Left cardiac atrium (tissue), 4 donors: ENCODE measurements at regions of chr19 and their contacts with region 1.

Region 1: DNA sequence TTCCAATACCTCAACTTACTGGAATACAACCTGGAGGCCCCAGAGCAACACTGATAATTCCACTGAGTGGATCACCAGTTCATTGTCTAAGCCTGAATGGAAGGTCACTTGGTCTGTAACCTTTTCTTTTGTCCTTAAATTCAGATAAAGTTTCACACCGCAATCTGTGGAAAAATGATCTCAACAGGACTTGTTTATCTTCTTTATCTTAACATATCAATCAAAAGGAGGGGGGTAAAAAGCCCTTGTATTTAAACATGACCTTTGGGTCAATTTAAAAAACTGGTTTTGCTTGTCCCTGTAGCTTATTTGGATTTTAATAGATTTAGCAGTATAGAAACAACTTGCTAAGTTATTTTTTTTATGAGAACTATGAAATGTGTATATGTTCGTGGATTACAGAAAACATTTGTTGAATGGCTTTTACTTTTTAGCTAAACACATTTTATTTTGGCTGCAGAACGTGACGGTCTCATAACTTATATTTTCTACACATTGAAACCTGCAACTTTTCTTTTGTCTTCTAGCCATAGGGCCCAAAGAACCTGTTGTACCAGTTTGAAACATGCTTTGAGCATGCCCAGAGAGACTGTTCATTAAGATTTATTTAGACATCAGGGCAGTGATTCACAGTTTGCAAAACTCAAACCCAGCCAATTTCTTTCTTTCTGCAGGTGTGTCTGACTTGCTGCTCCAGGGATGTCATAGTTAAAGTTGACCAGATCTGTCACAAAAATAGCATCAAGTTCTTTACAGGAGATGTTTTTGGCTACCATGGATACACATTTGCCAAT is 21.8 kb downstream of the SAE1 start:
- DNase-seq: no peak
- ATAC-seq: no peak

Region 2: DNA sequence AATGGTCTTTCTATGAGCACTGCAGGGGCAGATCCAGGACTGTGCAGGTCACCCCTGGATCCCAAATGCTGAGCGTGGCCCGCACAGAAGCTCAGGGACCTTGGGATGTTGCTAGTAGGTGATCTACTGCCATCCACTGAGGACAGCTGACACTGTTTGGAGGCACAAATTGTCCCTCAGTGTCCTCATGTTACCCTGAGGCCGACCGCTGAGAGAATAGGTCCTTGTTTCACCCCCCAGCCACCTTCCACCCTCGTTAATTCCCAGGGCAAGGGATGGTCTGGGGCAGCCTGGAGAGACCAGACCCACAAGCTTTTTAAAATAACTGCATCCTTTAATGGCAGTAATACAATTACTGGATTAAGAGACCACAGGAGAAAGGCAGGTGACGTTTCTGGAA is 88.5 kb before region 1 on chr19:
- intact Hi-C with region 1: no loop called
- DNase-seq: no peak
- ATAC-seq: no peak

Region 3: DNA sequence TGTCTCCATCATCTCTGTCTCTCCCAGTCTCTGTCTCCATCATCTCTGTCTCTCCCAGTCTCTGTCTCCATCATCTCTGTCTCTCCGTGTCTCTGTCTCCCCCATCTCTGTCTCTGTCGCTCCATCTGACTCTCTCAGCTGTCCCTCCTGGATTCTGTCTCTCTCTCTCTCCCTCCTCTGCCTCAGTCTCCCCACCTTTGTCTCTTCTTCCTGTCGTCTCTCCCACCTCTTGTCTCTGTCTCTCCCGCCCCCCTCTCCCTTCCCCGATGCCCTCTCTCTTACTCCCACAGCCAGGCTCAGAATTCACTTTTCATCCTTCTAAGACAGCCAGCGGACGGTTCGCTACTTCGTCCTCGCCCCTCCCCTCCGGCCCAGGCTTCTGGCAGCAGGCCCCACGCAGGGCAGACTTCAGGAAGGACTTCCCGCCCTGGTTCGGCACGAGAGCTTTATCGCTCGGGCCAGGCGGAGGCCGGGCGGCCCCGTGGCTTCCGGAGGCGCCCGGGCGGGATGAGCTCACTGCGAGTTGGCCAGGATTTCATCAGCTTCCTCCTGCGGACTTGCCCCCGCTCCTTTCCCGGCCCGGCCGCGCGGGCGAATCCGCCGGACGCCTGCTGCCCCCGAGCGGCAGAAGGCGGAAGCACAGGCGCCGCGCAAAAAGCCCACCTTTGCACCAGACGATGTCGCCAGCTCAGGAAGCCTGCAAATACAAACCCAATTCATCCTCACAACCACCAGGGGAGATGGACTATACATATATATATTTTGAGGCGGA is 91.5 kb after region 1 on chr19:
- intact Hi-C with region 1: loop called (anchors 2 kb)
- DNase-seq: peak; percentile 95
- ATAC-seq: peak; percentile 92 to 93

Region 4: DNA sequence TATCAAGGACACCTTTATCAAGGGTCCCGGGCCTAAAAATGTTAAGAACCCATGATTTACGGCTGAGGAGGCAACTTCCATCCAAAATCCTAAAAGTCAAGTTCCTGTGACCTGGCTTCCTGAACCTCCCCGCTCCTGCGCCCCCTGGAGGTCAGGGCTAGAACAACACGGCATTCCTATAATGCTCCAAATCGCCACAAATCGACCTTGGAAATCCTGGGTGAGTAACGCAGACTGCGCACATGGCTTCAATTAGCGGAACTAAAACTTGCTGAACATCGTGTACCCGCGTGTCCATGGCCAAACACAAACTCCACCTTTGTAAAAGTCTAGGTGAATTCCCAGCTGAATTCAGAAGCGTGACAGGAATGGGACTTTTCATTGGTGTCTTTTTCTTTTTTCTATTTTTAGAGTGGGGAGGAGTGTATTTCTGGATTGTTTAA is 152.9 kb after region 1 on chr19:
- intact Hi-C with region 1: no loop called
- DNase-seq: peak; percentile 64
- ATAC-seq: peak; percentile 48 to 51